ENCODE measurements at regions of chr1 and their contacts with region 1.

Region 1: GRCh38 chr1:179229214-179230140 is at the start of gene ABL2:
- DNase-seq: peak; percentile 1 to 74 (median 59)
- ATAC-seq: peak; percentile 63
- H3K4me3 ChIP-seq: peak within 1 kb of the TSS; percentile 67
- H3K4me3 Mint-ChIP-seq: peak within 1 kb of the TSS; percentile 90
- H3K27ac ChIP-seq: peak within 1 kb of the TSS; percentile 51 to 53
- H3K27ac Mint-ChIP-seq: peak within 1 kb of the TSS; percentile 91
- H3K4me1 ChIP-seq: peaks cover 14% of the 10 kb centered on the region
- H3K4me1 Mint-ChIP-seq: peaks cover 32% of the 10 kb centered on the region
- H3K27me3 ChIP-seq: no peaks in the 10 kb centered on the region
- H3K27me3 Mint-ChIP-seq: no peaks in the 10 kb centered on the region
- CTCF ChIP-seq: no peak
- total RNA-seq, gene ABL2: 12.4 to 14.6 TPM

Region 2: GRCh38 chr1:179034720-179035119 is 194.8 kb before region 1 on chr1:
- CTCF ChIA-PET with region 1: no interaction called
- POLR2A ChIA-PET with region 1: no interaction called
- intact Hi-C with region 1: loop called in 1 of 2 experiments (anchors 5 kb)
- DNase-seq: peak in 1 of 9 experiments; percentile 41
- ATAC-seq: peak; percentile 55
- H3K4me3 ChIP-seq: no peak overlapping the region
- H3K4me3 Mint-ChIP-seq: no peak overlapping the region
- H3K27ac ChIP-seq: no peak overlapping the region
- H3K27ac Mint-ChIP-seq: peak overlapping the region; percentile 78
- H3K4me1 ChIP-seq: peaks cover 40% of the 10 kb centered on the region
- H3K4me1 Mint-ChIP-seq: peaks cover 80% of the 10 kb centered on the region
- H3K27me3 ChIP-seq: no peaks in the 10 kb centered on the region
- H3K27me3 Mint-ChIP-seq: no peaks in the 10 kb centered on the region
- CTCF ChIP-seq: no peak

Region 3: GRCh38 chr1:179121159-179121938 is 108.1 kb before region 1 on chr1:
- CTCF ChIA-PET with region 1: interaction called, 3 read pairs
- POLR2A ChIA-PET with region 1: no interaction called
- intact Hi-C with region 1: loop called (anchors 2 to 5 kb)
- DNase-seq: peak in 7 of 9 experiments; percentile 6 to 63 (median 50)
- ATAC-seq: peak; percentile 44
- H3K4me3 ChIP-seq: no peak overlapping the region
- H3K4me3 Mint-ChIP-seq: no peak overlapping the region
- H3K27ac ChIP-seq: no peak overlapping the region
- H3K27ac Mint-ChIP-seq: no peak overlapping the region
- H3K4me1 ChIP-seq: no peaks in the 10 kb centered on the region
- H3K4me1 Mint-ChIP-seq: no peaks in the 10 kb centered on the region
- H3K27me3 ChIP-seq: no peaks in the 10 kb centered on the region
- H3K27me3 Mint-ChIP-seq: no peaks in the 10 kb centered on the region
- CTCF ChIP-seq: peak; percentile 55

Region 4: DNA sequence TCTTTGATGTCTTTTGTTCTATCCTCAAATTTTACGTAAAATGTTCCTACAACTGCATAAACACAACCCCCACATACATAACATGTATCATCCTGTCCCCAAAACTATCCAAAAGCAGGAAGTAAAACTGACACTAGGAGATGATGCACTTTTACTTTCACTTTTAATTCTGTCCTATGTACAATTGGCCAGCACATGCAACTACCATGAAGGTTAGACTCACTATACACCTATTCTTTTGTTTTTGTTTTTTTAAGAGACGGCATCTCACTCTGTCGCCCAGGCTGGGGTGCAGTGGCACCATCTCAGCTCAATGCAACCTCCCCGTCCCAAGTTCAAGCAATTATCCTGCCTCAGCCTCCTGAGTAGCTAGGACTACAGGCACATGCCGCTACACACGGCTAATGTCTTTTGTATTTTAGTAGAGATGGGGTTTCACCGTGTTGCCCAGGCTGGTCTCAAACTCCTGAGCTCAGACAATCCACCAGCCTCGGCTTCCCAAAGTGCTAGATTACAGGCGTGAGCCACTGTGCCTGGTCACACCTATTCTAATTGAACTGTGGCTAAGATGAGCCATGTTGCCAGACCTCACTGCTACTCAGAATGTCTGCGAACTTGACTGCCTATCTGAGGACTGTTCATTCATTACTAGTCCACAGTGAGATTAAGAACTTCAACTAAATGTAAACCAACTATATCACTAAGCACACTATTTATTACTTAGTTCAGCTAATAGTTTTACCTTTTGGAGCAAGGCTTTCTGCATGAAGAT is 99.6 kb before region 1 on chr1:
- CTCF ChIA-PET with region 1: no interaction called
- POLR2A ChIA-PET with region 1: no interaction called
- intact Hi-C with region 1: loop called in 1 of 2 experiments (anchors 5 kb)
- DNase-seq: peak in 5 of 9 experiments; percentile 6 to 83 (median 64)
- ATAC-seq: peak; percentile 96
- H3K4me3 ChIP-seq: peak overlapping the region; percentile 12 to 26
- H3K4me3 Mint-ChIP-seq: peak overlapping the region; percentile 68
- H3K27ac ChIP-seq: peak overlapping the region; percentile 52 to 80
- H3K27ac Mint-ChIP-seq: peak overlapping the region; percentile 90
- H3K4me1 ChIP-seq: peaks cover 17% of the 10 kb centered on the region
- H3K4me1 Mint-ChIP-seq: peaks cover 19% of the 10 kb centered on the region
- H3K27me3 ChIP-seq: no peaks in the 10 kb centered on the region
- H3K27me3 Mint-ChIP-seq: no peaks in the 10 kb centered on the region
- CTCF ChIP-seq: no peak

Measured in CD8-positive, alpha-beta T cell (primary cell).